ENCODE measurements at regions of chr17 and their contacts with region 1.

Region 1: DNA sequence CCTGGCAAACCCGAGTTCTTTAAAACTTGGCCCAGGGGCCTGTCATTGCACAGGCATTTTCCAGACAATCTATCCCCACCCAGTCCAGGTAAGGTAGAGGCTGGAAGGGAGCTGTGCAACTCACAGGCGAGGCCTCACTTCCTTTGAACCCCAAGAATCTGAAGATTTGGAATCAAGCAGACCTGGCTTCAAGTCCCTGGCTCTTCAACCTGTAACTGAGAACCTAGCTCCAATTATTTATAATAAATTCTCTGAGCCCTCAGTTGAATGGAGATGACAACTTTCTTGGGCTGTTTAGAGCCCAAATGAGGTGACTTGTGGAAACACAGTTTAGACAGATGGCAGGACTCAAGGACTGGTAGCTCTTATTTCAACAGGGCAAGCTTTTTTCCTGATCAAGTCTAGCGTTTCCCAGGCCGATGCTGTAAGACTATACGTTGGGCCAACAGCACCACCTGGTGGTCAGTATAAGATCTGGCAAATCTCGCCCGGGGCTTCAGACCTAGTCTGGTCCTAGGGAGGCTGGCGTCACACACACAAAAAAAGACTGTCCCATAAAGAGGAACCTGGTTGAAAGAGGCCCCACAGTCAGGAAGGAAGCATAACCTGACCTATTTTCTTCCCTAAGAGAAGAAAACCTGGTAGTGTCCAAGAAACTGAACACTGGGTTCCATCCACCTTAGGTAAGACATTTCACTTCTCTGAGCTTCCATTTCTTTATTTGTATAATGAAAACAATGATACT is 117.9 kb downstream of the C17orf67 start:
- DNase-seq: peak; percentile 74
- H3K4me3 ChIP-seq: no peak overlapping the region
- H3K27ac ChIP-seq: no peak overlapping the region
- H3K4me1 ChIP-seq: no peaks in the 10 kb centered on the region
- H3K27me3 ChIP-seq: no peaks in the 10 kb centered on the region
- CTCF ChIP-seq: peak in 3 of 4 experiments; percentile 78 to 85 (median 79)
- POLR2A ChIP-seq: no peak

Region 2: DNA sequence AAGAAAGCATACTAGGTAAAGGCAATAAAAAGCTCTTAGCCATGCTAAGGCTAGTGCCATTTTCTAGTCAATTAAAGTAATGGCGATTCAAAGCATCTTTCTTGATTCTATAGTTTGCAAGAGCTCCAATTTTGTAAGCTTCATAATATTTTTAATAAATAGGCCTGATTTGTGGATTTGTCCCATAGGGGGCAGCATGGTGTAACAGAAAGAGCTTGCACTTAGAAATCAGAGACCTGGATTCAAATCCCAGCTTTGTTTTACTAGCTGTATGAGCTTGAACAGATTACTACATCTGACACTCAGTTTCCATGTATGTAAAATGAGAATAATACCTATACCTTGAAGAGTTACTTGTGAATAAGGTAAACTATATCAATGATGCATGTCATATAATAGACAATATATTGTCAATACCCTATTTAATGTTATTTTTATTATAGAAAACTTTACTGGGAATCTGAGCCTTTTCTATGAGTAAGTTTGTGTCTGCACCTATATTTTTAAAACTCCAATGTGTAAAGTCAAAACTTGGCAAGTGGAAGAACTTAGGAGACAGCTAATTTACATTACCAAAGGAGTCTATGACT is 215.9 kb before region 1 on chr17:
- intact Hi-C with region 1: loop called (anchors 10 kb)
- DNase-seq: no peak
- H3K4me3 ChIP-seq: no peak overlapping the region
- H3K27ac ChIP-seq: no peak overlapping the region
- H3K4me1 ChIP-seq: no peaks in the 10 kb centered on the region
- H3K27me3 ChIP-seq: no peaks in the 10 kb centered on the region
- CTCF ChIP-seq: peak in 1 of 4 experiments; percentile 8
- POLR2A ChIP-seq: no peak

Region 3: GRCh38 chr17:56592487-56593085 is 123.2 kb before region 1 on chr17:
- intact Hi-C with region 1: loop called (anchors 1 kb)
- DNase-seq: peak; percentile 25
- H3K4me3 ChIP-seq: peak overlapping the region; percentile 39 to 42
- H3K27ac ChIP-seq: no peak overlapping the region
- H3K4me1 ChIP-seq: peaks cover 5% of the 10 kb centered on the region
- H3K27me3 ChIP-seq: no peaks in the 10 kb centered on the region
- CTCF ChIP-seq: peak; percentile 91 to 97 (median 94)
- POLR2A ChIP-seq: no peak

Region 4: DNA sequence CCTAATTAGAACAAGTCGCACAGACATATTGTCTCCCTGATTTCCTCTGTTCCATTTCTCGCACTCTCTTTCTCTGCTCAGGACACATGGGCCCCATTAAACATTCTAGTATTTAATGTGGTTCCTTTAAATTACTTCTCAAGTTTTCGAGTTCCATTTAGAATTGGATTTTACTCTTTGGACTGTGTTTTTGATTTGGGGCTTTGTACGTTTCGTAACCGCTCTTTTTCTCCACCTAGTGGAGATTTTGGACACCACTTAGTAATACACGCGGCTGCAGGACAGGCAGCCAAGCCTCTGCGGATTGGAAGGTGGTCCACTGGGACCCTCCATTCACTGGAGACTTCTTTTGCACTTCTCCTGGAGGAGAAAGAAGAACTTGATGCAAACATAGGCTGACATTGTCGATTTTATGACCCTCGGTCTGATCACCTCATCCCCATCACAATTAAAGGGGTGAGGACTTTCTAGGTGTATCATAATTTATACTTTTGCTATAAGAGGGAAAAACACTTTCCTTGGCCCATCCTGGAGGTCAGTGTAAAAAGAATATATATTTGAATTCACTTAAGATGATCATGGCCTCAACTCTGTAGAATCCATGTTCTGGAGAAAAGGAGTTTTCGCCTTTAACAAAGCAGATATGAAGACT is 36.5 kb before region 1 on chr17:
- intact Hi-C with region 1: loop called (anchors 5 kb)
- DNase-seq: no peak
- H3K4me3 ChIP-seq: no peak overlapping the region
- H3K27ac ChIP-seq: no peak overlapping the region
- H3K4me1 ChIP-seq: no peaks in the 10 kb centered on the region
- H3K27me3 ChIP-seq: no peaks in the 10 kb centered on the region
- CTCF ChIP-seq: peak; percentile 23 to 46 (median 41)
- POLR2A ChIP-seq: no peak

Region 5: DNA sequence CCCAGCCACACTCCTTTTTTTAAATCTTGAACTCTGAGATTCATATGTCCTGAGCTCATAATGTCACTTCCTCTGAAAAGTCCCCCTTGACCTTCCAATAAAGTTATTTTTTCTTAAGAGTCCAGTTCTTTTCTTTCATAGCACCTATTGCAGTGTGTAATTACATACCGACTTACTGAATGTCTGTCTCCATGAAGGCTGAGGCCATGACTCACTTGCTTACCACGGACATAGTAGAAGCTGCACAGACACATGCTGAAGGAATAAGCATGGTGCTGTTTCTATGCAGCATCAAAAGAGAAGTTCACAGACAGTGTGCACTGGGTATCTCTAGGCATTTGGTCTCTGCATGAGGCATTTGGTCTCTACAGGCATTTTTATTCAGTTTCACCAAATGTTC is 40.8 kb after region 1 on chr17:
- intact Hi-C with region 1: no loop called
- DNase-seq: no peak
- H3K4me3 ChIP-seq: no peak overlapping the region
- H3K27ac ChIP-seq: no peak overlapping the region
- H3K4me1 ChIP-seq: no peaks in the 10 kb centered on the region
- H3K27me3 ChIP-seq: no peaks in the 10 kb centered on the region
- CTCF ChIP-seq: no peak
- POLR2A ChIP-seq: no peak

Region 6: DNA sequence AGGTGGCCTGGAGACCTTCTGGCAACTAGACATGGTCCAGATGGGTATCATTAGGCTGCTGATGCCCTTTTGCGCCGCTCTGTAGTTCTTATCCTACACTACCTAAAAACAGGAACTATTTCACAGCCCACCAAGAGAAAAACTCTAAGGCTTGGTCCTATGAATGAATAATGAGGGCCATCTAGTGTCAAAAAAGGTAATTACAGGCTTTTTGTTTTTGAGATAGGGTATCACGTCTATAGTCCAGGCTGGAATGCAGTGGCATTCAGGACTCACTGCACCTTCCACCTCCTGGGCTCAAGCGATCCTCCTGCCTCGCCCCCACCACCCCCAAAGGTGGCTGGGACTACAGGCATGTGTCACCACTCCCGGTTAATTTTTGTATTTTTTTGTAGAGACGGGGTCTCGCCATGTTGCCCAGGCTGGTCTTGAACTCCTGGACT is 224.1 kb after region 1 on chr17:
- intact Hi-C with region 1: loop called (anchors 10 kb)
- DNase-seq: no peak
- H3K4me3 ChIP-seq: no peak overlapping the region
- H3K27ac ChIP-seq: no peak overlapping the region
- H3K4me1 ChIP-seq: no peaks in the 10 kb centered on the region
- H3K27me3 ChIP-seq: no peaks in the 10 kb centered on the region
- CTCF ChIP-seq: peak; percentile 38 to 75 (median 68)
- POLR2A ChIP-seq: no peak